Esophagus squamous epithelium (tissue), 5 donors: ENCODE measurements at regions of chr14 and their contacts with region 1.

Region 1: DNA sequence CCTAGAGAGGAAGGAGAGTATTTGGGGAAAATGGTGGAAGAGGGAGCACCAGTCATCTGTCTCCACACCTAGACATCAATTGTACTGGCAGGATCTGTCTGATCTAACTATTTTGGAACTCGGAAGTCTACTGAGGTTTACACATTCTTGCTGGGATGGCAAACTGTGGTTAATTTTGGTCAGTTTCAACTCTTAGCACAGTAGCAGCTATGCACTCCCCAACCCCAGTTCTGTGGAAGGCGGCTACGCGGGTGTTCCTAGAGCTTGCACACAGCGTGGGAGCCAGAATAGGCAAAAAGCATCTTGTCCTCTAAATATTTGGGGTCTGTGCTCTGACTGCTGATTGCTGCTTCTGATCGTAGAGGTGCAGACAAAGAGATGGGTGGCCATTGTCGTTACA is 33.8 kb downstream of the TECPR2 start:
- DNase-seq: no peak
- H3K4me3 ChIP-seq: no peak overlapping the region
- H3K27ac ChIP-seq: no peak overlapping the region
- H3K4me1 ChIP-seq: peaks cover 0 to 6% (median 0%) of the 10 kb centered on the region in 3 donors
- H3K27me3 ChIP-seq: no peaks in the 10 kb centered on the region
- CTCF ChIP-seq: no peak
- POLR2A ChIP-seq: no peak

Region 2: GRCh38 chr14:102362545-102363181 is 33.9 kb before region 1 on chr14 and contains the starts of genes CINP and TECPR2:
- intact Hi-C with region 1: loop called (anchors 2 kb)
- DNase-seq: peak; percentile 82
- H3K4me3 ChIP-seq: peak within 1 kb of the TSS; percentile 75 to 99 (median 85)
- H3K27ac ChIP-seq: peak within 1 kb of the TSS; percentile 90 to 96 (median 93)
- H3K4me1 ChIP-seq: peaks cover 15 to 36% (median 19%) of the 10 kb centered on the region in 3 donors
- H3K27me3 ChIP-seq: no peaks in the 10 kb centered on the region
- CTCF ChIP-seq: no peak
- POLR2A ChIP-seq: peak in 3 of 4 donors; percentile 14 to 81 (median 73)
- total RNA-seq, gene CINP: 23.2 to 42.4 (median 38.0) TPM
- total RNA-seq, gene TECPR2: 5.4 to 18.1 (median 12.9) TPM